PC-9 (cell line): ENCODE measurements at regions of chr4 and their contacts with region 1.

Region 1: DNA sequence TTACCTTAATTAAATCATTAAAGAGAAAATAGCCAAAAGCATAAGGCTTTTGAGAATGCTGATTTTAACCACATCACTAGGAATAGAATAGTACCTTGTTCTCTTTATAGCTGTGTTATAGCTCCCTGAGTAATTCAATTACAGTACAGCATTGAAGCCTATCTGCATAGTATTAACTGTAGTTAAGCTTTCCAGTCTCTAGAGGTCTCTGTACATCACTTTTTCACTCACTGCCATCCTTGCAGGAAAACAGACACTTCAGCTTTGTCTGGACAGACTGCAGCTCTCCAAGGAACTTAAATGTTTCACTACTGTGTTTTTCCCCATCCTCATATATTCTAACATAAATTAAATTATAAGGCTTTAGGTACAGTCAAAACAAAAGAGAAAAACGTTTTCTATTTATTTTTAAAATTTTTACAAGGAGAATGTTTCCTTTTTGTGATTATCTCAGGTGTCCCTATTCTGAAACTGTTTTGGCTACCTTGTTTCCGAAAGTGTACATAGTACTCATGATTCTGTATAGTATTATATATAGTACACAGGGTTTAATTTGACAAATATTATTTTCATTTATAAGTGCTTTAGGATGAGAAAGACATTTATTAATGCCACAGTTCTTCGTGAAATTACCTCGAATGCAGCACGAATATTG is 407.9 kb downstream of the PCDH18 start:
- DNase-seq: peak; percentile 1 to 36
- H3K4me3 ChIP-seq: peak overlapping the region; percentile 56; the same call in 1 of the 2 replicates
- H3K27ac ChIP-seq: no peak overlapping the region
- H3K4me1 ChIP-seq: no peaks in the 10 kb centered on the region
- H3K27me3 ChIP-seq: no peaks in the 10 kb centered on the region
- CTCF ChIP-seq: peak; percentile 62

Region 2: GRCh38 chr4:137106287-137106686 is 18.1 kb before region 1 on chr4:
- CTCF ChIA-PET with region 1: no interaction called
- POLR2A ChIA-PET with region 1: no interaction called
- intact Hi-C with region 1: no loop called
- DNase-seq: no peak
- H3K4me3 ChIP-seq: no peak overlapping the region
- H3K27ac ChIP-seq: no peak overlapping the region
- H3K4me1 ChIP-seq: no peaks in the 10 kb centered on the region
- H3K27me3 ChIP-seq: no peaks in the 10 kb centered on the region
- CTCF ChIP-seq: no peak

Region 3: GRCh38 chr4:137861682-137862081 is 737.3 kb after region 1 on chr4:
- CTCF ChIA-PET with region 1: no interaction called
- POLR2A ChIA-PET with region 1: no interaction called
- intact Hi-C with region 1: loop called (anchors 1 kb)
- DNase-seq: no peak
- H3K4me3 ChIP-seq: no peak overlapping the region
- H3K27ac ChIP-seq: no peak overlapping the region
- H3K4me1 ChIP-seq: no peaks in the 10 kb centered on the region
- H3K27me3 ChIP-seq: no peaks in the 10 kb centered on the region
- CTCF ChIP-seq: peak; percentile 64

Region 4: GRCh38 chr4:138919094-138919936 is 1794.9 kb after region 1 on chr4:
- CTCF ChIA-PET with region 1: no interaction called
- POLR2A ChIA-PET with region 1: no interaction called
- intact Hi-C with region 1: loop called (anchors 10 kb)
- DNase-seq: peak; percentile 44 to 77
- H3K4me3 ChIP-seq: no peak overlapping the region
- H3K27ac ChIP-seq: no peak overlapping the region
- H3K4me1 ChIP-seq: no peaks in the 10 kb centered on the region
- H3K27me3 ChIP-seq: no peaks in the 10 kb centered on the region
- CTCF ChIP-seq: peak; percentile 69